ENCODE measurements at regions of chr10 and their contacts with region 1.

Region 1: DNA sequence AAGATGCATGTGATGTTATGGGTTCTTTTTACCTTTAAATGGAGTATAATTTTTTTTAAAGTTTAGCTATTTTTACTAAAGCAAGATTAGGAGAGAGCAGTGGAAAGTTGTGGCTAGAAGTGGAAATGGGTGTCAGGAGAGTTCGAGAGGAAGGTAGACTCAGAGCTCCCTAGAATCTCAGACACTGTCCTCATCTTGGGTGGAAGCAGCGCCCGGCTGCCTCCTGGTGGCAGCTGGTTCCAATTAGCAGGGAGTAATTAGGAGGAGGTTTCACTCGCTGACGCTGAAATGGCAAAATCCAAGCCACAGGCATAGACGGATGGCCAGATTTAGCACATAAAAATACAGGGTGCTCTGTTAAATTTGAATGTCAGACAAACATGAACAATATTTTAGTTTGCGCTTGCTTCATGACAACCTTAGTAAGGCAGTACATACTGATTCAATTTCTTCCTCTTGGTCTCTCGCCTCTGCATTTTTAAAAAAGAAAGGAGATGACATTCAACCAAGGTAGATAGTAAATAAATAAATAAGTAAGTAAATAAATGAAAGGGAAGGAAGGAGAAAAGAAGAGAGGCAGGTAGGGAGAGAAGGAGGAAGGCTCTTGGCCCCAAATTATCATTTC is 58.5 kb downstream of the LGI1 start:
- DNase-seq: peak; percentile 60
- ATAC-seq: peak; percentile 77
- H3K4me3 ChIP-seq: peak overlapping the region; percentile 4 to 22; a peak in 3 of 4 replicates
- H3K27ac ChIP-seq: no peak overlapping the region
- H3K4me1 ChIP-seq: peaks cover 6 to 46% of the 10 kb centered on the region in 2 experiments; a peak in 3 of 4 replicates
- H3K27me3 ChIP-seq: no peaks in the 10 kb centered on the region
- CTCF ChIP-seq: peak; percentile 81 to 83 (median 83)
- POLR2A ChIP-seq: no peak
- RAD21 ChIP-seq: peak; percentile 81

Region 2: DNA sequence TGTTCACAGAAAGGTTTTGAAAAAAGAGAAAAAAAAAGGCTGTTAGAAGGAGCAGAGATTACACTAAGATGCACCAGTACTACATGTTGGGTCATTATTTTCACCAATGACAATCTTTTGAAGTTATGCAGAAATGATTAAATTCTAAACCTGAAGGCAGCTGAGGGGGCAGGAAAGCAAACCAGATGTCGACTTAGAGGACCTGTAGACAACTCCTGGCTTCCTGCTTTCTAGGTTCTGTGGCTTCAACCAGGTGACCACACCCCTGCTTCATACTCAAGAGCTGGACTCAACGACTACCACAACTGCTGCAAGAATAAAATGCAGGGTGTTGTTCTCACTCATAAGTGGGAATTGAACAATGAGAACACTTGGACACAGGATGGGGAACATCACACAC is 364.1 kb before region 1 on chr10:
- CTCF ChIA-PET with region 1: no interaction called
- POLR2A ChIA-PET with region 1: no interaction called
- RAD21 ChIA-PET with region 1: no interaction called
- intact Hi-C with region 1: no loop called
- DNase-seq: no peak
- ATAC-seq: 0 out of 2 replicates have a peak, but pooled peaks have one; percentile 26
- H3K4me3 ChIP-seq: no peak overlapping the region
- H3K27ac ChIP-seq: 0 out of 2 replicates have a peak overlapping the region, but pooled peaks have one; percentile 8
- H3K4me1 ChIP-seq: peaks cover 43 to 78% of the 10 kb centered on the region in 2 experiments
- H3K27me3 ChIP-seq: no peaks in the 10 kb centered on the region
- CTCF ChIP-seq: no peak
- POLR2A ChIP-seq: no peak
- RAD21 ChIP-seq: no peak

Region 3: DNA sequence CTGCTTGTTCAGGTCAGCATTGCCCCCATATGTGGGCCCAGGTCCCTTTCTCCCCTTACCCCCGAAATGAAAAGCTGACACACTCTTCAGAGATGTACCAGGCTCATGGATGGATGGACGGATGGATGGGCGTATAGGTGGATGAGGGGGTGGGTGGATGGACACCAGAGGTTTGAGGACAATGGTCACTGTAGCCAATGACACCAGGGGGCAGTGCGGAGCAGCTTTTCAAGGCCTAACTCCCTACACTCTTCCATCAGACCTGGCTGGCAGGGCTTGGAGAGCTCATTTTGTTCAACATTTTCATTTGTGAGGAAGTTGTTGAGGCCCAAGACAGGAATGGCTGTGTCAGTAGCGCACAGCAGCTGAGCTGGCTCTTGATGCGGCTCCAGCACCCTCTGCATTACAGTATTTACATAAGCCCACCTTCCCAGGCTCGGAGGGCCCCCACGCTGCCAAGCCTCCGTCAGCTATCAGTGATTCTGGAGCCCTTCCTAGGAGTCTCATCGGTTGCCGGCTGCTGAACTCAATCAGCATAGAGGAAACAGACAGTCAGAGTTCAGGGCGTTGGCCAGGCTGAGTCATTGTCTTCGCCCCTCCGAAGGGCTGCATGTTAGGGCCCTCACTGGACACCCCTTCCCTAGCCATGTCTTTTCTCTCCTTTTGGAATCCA is 261.3 kb before region 1 on chr10:
- CTCF ChIA-PET with region 1: interaction called, 22 read pairs
- POLR2A ChIA-PET with region 1: no interaction called
- RAD21 ChIA-PET with region 1: no interaction called
- intact Hi-C with region 1: loop called (anchors 2 kb)
- DNase-seq: peak; percentile 47
- ATAC-seq: peak; percentile 99
- H3K4me3 ChIP-seq: no peak overlapping the region
- H3K27ac ChIP-seq: no peak overlapping the region
- H3K4me1 ChIP-seq: peaks cover 0 to 7% of the 10 kb centered on the region in 2 experiments; a peak in 2 of 4 replicates
- H3K27me3 ChIP-seq: no peaks in the 10 kb centered on the region
- CTCF ChIP-seq: peak; percentile 49 to 86 (median 79); a peak in 5 of 6 replicates
- POLR2A ChIP-seq: no peak
- RAD21 ChIP-seq: peak; percentile 73

Region 4: GRCh38 chr10:93652857-93653256 is 163.4 kb before region 1 on chr10:
- CTCF ChIA-PET with region 1: no interaction called
- POLR2A ChIA-PET with region 1: no interaction called
- RAD21 ChIA-PET with region 1: no interaction called
- intact Hi-C with region 1: no loop called
- DNase-seq: no peak
- ATAC-seq: no peak
- H3K4me3 ChIP-seq: no peak overlapping the region
- H3K27ac ChIP-seq: no peak overlapping the region
- H3K4me1 ChIP-seq: peaks cover 0 to 6% of the 10 kb centered on the region in 2 experiments; a peak in 2 of 4 replicates
- H3K27me3 ChIP-seq: no peaks in the 10 kb centered on the region
- CTCF ChIP-seq: no peak
- POLR2A ChIP-seq: no peak
- RAD21 ChIP-seq: no peak

Region 5: GRCh38 chr10:93746844-93747284 is 69.4 kb before region 1 on chr10:
- CTCF ChIA-PET with region 1: interaction called, 92 read pairs
- POLR2A ChIA-PET with region 1: interaction called, 10 read pairs
- RAD21 ChIA-PET with region 1: interaction called, 5 to 7 read pairs
- intact Hi-C with region 1: loop called (anchors 1 kb)
- DNase-seq: peak; percentile 70
- ATAC-seq: peak; percentile 94
- H3K4me3 ChIP-seq: peak overlapping the region in 1 of 2 experiments; percentile 12; a peak in 1 of 4 replicates
- H3K27ac ChIP-seq: 0 out of 2 replicates have a peak overlapping the region, but pooled peaks have one; percentile 8
- H3K4me1 ChIP-seq: peaks cover 0 to 21% of the 10 kb centered on the region in 2 experiments; a peak in 2 of 4 replicates
- H3K27me3 ChIP-seq: no peaks in the 10 kb centered on the region
- CTCF ChIP-seq: peak; percentile 72 to 77 (median 76); a peak in 5 of 6 replicates
- POLR2A ChIP-seq: no peak
- RAD21 ChIP-seq: peak; percentile 66

Region 6: DNA sequence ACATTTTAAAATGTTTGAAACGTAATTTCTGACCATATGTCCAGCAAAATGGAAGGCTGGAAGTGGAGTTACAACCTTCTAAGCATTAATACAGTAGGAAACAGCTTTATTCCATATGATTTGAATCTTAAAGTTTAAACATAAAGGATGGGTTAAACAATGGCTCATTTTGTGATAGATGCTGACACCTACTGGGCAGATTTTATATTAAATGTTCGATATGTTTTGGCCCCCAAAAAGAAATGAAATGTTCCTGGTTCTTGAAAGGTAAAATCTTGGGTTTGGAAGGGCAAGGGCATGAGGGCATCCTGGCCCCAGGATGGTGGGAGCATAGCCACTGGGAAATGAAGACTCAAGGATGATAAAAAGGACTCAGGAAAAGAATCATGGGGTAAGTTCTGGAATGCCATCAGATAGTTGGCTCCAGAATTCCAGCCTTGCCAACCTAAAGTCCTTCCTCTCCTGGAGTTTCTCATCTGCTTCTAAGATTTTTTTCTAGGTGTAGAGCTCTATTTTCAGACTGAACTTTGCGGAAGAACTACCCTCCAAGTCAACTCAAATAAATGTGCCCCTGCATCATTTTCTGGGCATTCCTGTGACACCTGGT is 42.9 kb after region 1 on chr10:
- CTCF ChIA-PET with region 1: interaction called, 11 read pairs
- POLR2A ChIA-PET with region 1: no interaction called
- RAD21 ChIA-PET with region 1: interaction called in 1 of 2 experiments, 4 read pairs
- intact Hi-C with region 1: loop called (anchors 2 kb)
- DNase-seq: peak; percentile 3
- ATAC-seq: peak; percentile 57
- H3K4me3 ChIP-seq: no peak overlapping the region
- H3K27ac ChIP-seq: no peak overlapping the region
- H3K4me1 ChIP-seq: no peaks in the 10 kb centered on the region
- H3K27me3 ChIP-seq: no peaks in the 10 kb centered on the region
- CTCF ChIP-seq: peak; percentile 19 to 71 (median 63); a peak in 5 of 6 replicates
- POLR2A ChIP-seq: no peak
- RAD21 ChIP-seq: peak; percentile 74

Region 7: DNA sequence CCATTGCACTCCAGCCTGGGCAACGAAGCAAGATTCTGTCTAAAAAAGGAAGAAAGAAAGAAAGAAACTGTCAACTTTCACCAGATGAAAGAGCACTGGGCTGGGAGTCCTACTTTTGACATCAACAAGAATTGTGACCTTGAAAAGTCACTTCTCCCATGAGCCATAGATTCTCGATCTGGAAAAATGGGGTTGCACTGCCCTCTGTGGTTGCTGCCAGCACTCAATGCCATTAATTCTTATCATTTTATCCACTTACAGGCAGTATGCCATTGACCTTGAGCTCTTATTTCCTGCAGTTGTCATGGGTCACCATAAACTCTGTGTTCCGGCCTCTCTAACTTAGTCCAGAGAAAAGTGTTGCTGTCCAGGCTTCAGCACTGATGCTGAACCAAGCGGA is 409.4 kb after region 1 on chr10:
- CTCF ChIA-PET with region 1: interaction called, 4 read pairs
- POLR2A ChIA-PET with region 1: no interaction called
- RAD21 ChIA-PET with region 1: no interaction called
- intact Hi-C with region 1: loop called (anchors 10 kb)
- DNase-seq: no peak
- ATAC-seq: peak; percentile 63
- H3K4me3 ChIP-seq: no peak overlapping the region
- H3K27ac ChIP-seq: no peak overlapping the region
- H3K4me1 ChIP-seq: no peaks in the 10 kb centered on the region
- H3K27me3 ChIP-seq: no peaks in the 10 kb centered on the region
- CTCF ChIP-seq: peak; percentile 17 to 38 (median 27); a peak in 3 of 6 replicates
- POLR2A ChIP-seq: no peak
- RAD21 ChIP-seq: peak; percentile 59

Region 8: DNA sequence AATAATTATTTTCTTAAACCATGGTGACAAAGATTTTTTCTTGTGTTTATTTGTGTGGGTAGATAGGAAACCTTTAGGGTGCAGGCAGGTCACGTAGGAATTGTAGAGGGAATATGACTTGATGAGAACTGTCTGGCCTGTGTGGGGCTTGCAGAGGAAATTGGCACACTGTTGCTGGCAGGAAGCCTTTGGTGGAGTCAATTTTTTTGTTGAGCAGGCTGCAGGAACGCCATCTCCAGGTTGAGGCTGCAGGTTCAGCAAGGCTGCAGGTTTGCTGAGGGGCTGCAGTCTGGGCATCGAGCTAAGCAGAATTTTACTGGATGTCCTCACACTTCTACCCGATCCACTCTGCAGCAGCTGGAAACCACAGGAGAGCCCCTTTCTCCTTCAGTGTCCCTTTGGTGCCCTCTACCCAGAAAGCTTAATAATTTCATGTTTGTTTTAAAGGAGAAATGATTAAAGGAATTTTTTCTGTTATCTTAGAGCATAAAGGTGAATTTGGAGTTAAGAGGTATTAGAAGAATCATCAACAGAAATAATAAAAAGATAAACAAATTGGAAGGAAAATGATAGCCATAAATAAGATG is 623.1 kb after region 1 on chr10:
- CTCF ChIA-PET with region 1: interaction called, 29 read pairs
- POLR2A ChIA-PET with region 1: no interaction called
- RAD21 ChIA-PET with region 1: interaction called in 1 of 2 experiments, 6 read pairs
- intact Hi-C with region 1: loop called (anchors 1 kb)
- DNase-seq: no peak
- ATAC-seq: 0 out of 2 replicates have a peak, but pooled peaks have one; percentile 30
- H3K4me3 ChIP-seq: no peak overlapping the region
- H3K27ac ChIP-seq: no peak overlapping the region
- H3K4me1 ChIP-seq: no peaks in the 10 kb centered on the region
- H3K27me3 ChIP-seq: no peaks in the 10 kb centered on the region
- CTCF ChIP-seq: no peak
- POLR2A ChIP-seq: no peak
- RAD21 ChIP-seq: no peak

Region 9: DNA sequence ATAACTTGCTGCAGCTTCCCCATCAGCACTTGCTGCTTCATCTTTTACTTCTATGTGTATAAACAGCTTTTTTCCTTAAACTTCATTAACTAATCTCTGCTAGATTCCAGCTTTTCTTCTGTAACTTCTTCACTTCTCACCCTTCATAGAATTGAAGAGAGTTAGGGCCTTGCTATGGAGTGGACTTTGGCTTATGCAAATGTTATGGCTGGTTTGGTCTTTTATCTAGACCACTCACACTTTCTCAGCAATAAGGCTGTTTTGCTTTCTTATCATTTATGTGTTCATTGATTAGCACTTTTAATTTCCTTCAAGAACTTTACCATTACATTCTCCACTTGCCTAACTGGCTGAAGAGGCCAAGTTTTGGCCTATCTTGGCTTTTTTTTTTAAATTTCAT is 665.2 kb after region 1 on chr10:
- CTCF ChIA-PET with region 1: no interaction called
- POLR2A ChIA-PET with region 1: no interaction called
- RAD21 ChIA-PET with region 1: no interaction called
- intact Hi-C with region 1: no loop called
- DNase-seq: no peak
- ATAC-seq: no peak
- H3K4me3 ChIP-seq: no peak overlapping the region
- H3K27ac ChIP-seq: no peak overlapping the region
- H3K4me1 ChIP-seq: no peaks in the 10 kb centered on the region
- H3K27me3 ChIP-seq: no peaks in the 10 kb centered on the region
- CTCF ChIP-seq: no peak
- POLR2A ChIP-seq: no peak
- RAD21 ChIP-seq: no peak

Measured in HCT116 (cell line).